Heart left ventricle (tissue), 16 donors: ENCODE measurements at regions of chr3 and their contacts with region 1.

Region 1: DNA sequence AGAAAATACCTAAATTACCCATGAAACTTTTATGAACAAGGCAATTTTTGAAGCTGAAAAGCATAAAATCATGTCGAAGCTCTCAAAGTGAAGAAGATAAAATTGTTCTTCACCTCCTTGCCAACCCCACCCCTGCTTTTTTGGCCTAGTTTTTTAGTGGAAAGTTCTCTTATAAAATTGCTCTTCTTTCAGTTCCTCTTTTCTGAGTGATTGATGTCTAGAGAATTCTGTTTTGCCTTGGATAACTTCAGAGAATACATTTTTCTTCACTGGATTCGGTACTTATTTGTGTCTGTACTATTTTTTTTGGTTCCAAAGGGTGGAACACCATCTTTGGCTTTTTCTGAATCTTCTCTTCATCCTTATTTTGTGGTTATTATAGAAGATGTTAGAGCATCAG is 25.0 kb upstream of the PYDC2 start:
- DNase-seq: no peak
- ATAC-seq: no peak
- H3K4me3 ChIP-seq: no peak overlapping the region
- H3K27ac ChIP-seq: no peak overlapping the region
- H3K4me1 ChIP-seq: no peaks in the 10 kb centered on the region
- H3K27me3 ChIP-seq: no peaks in the 10 kb centered on the region
- CTCF ChIP-seq: no peak
- POLR2A ChIP-seq: no peak

Region 2: GRCh38 chr3:192122832-192123594 is 687.0 kb after region 1 on chr3:
- intact Hi-C with region 1: loop called in 1 of 10 experiments (anchors 10 kb)
- DNase-seq: peak in 1 of 5 donors; percentile 18
- ATAC-seq: peak in 1 of 4 donors; percentile 49
- H3K4me3 ChIP-seq: no peak overlapping the region
- H3K27ac ChIP-seq: no peak overlapping the region
- H3K4me1 ChIP-seq: peaks cover 0 to 5% (median 0%) of the 10 kb centered on the region in 12 donors
- H3K27me3 ChIP-seq: no peaks in the 10 kb centered on the region
- CTCF ChIP-seq: no peak
- POLR2A ChIP-seq: no peak